Naive thymus-derived CD4-positive, alpha-beta T cell (primary cell): ENCODE measurements at regions of chr1 and their contacts with region 1.

Region 1: DNA sequence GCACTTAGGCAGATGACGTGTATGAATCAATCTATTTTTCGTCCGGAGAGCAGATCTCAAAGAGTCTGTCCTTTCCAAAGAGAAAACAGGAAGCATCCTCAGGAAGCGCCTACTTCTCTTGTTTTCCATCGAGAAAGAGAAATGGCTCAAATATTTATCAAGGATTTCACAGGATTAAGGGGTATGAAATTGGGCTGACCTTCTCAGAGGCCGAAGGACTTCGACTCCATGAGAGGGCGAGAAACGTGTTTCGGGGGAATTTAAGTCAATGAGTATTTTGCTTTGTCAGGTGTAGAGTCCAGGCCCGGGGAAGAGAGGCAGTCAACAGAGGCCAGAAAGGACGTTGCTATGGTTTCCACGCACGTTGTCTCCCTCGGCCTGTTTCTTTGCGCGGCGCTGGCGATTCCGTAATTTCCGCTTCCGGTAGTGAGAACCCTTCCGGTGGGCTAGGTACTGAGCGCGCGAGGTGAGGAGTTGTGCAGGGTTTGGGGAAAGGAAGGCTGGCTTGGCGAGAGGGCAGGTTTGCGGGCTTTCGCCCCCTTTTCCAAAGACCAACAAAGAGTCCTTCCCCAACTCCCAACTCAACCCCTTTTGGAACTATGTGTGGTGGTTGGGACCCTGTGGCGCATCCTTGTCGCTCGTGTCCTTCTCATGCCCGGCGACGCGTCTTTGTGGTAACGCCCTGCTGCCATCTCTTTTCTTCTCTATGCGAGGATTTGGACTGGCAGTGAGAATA is at the start of gene MRPS21:
- DNase-seq: peak; percentile 64 to 88 (median 83)
- ATAC-seq: peak; percentile 99
- H3K4me3 ChIP-seq: peak within 1 kb of the TSS; percentile 76
- H3K4me3 Mint-ChIP-seq: peak within 1 kb of the TSS; percentile 85 to 97 (median 92)
- H3K27ac ChIP-seq: peak within 1 kb of the TSS; percentile 92
- H3K27ac Mint-ChIP-seq: peak within 1 kb of the TSS; percentile 92 to 100 (median 98)
- H3K4me1 ChIP-seq: peaks cover 10 to 14% of the 10 kb centered on the region in 2 donors
- H3K4me1 Mint-ChIP-seq: peaks cover 20 to 45% (median 32%) of the 10 kb centered on the region in 7 donors
- H3K27me3 ChIP-seq: no peaks in the 10 kb centered on the region
- H3K27me3 Mint-ChIP-seq: no peaks in the 10 kb centered on the region
- total RNA-seq, gene MRPS21: 47.9 to 72.8 (median 67.5) TPM

Region 2: DNA sequence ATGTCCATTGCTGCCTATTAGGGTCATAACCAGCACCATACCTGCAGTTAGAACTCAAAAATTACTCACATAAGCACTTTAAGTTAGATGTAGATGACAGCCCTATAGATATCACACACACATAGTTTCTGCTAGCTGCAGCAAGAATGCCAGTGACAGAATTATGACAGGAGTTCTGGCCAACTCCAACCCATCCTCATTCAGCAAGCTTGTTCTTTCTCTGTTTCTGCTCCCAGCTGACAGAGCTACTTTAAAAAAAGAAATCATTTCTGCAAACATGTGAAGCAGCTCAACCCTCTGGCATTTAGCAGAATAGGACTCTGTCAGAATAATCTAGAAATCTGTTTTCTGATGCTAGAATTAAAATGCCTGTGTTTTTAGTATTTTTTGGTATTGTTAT is 259.3 kb before region 1 on chr1:
- CTCF ChIA-PET with region 1: no interaction called
- POLR2A ChIA-PET with region 1: no interaction called
- intact Hi-C with region 1: no loop called
- DNase-seq: no peak
- ATAC-seq: no peak
- H3K4me3 ChIP-seq: no peak overlapping the region
- H3K4me3 Mint-ChIP-seq: no peak overlapping the region
- H3K27ac ChIP-seq: no peak overlapping the region
- H3K27ac Mint-ChIP-seq: no peak overlapping the region
- H3K4me1 ChIP-seq: no peaks in the 10 kb centered on the region
- H3K4me1 Mint-ChIP-seq: no peaks in the 10 kb centered on the region
- H3K27me3 ChIP-seq: no peaks in the 10 kb centered on the region
- H3K27me3 Mint-ChIP-seq: peaks cover 0 to 20% (median 0%) of the 10 kb centered on the region in 5 donors

Region 3: GRCh38 chr1:150268705-150269403 is 24.7 kb before region 1 on chr1 and contains the start of gene APH1A:
- CTCF ChIA-PET with region 1: no interaction called
- POLR2A ChIA-PET with region 1: interaction called, 4 read pairs
- intact Hi-C with region 1: loop called (anchors 1 kb)
- DNase-seq: peak; percentile 69 to 92 (median 89)
- ATAC-seq: peak; percentile 97
- H3K4me3 ChIP-seq: peak within 1 kb of the TSS; percentile 87
- H3K4me3 Mint-ChIP-seq: peak within 1 kb of the TSS; percentile 94 to 99 (median 96)
- H3K27ac ChIP-seq: peak within 1 kb of the TSS; percentile 97
- H3K27ac Mint-ChIP-seq: peak within 1 kb of the TSS; percentile 88 to 99 (median 94)
- H3K4me1 ChIP-seq: peaks cover 13 to 20% of the 10 kb centered on the region in 2 donors
- H3K4me1 Mint-ChIP-seq: peaks cover 25 to 39% (median 30%) of the 10 kb centered on the region in 7 donors
- H3K27me3 ChIP-seq: no peaks in the 10 kb centered on the region
- H3K27me3 Mint-ChIP-seq: no peaks in the 10 kb centered on the region
- total RNA-seq, gene APH1A: 112 to 143 (median 127) TPM

Region 4: GRCh38 chr1:150281837-150282653 is 11.6 kb before region 1 on chr1 and contains the start of gene CIART:
- CTCF ChIA-PET with region 1: no interaction called
- POLR2A ChIA-PET with region 1: interaction called, 4 read pairs
- intact Hi-C with region 1: loop called in 1 of 2 experiments (anchors 1 kb)
- DNase-seq: peak; percentile 34 to 88 (median 82)
- ATAC-seq: peak; percentile 95
- H3K4me3 ChIP-seq: peak within 1 kb of the TSS; percentile 58
- H3K4me3 Mint-ChIP-seq: peak within 1 kb of the TSS; percentile 84 to 98 (median 94)
- H3K27ac ChIP-seq: peak within 1 kb of the TSS; percentile 52
- H3K27ac Mint-ChIP-seq: peak within 1 kb of the TSS; percentile 80 to 98 (median 91)
- H3K4me1 ChIP-seq: peaks cover 11 to 23% of the 10 kb centered on the region in 2 donors
- H3K4me1 Mint-ChIP-seq: peaks cover 20 to 36% (median 32%) of the 10 kb centered on the region in 7 donors
- H3K27me3 ChIP-seq: no peaks in the 10 kb centered on the region
- H3K27me3 Mint-ChIP-seq: peaks cover 0 to 13% (median 0%) of the 10 kb centered on the region in 5 donors
- total RNA-seq, gene CIART: 1.4 to 2.6 (median 2.4) TPM

Region 5: GRCh38 chr1:150309770-150310508 is 16.3 kb after region 1 on chr1:
- CTCF ChIA-PET with region 1: no interaction called
- POLR2A ChIA-PET with region 1: no interaction called
- intact Hi-C with region 1: loop called in 1 of 2 experiments (anchors 1 kb)
- DNase-seq: no peak
- ATAC-seq: no peak
- H3K4me3 ChIP-seq: no peak overlapping the region
- H3K4me3 Mint-ChIP-seq: no peak overlapping the region
- H3K27ac ChIP-seq: no peak overlapping the region
- H3K27ac Mint-ChIP-seq: peak overlapping the region in 1 of 9 donors; percentile 90
- H3K4me1 ChIP-seq: no peaks in the 10 kb centered on the region
- H3K4me1 Mint-ChIP-seq: no peaks in the 10 kb centered on the region
- H3K27me3 ChIP-seq: no peaks in the 10 kb centered on the region
- H3K27me3 Mint-ChIP-seq: no peaks in the 10 kb centered on the region

Region 6: GRCh38 chr1:150321826-150322166 is 28.2 kb after region 1 on chr1:
- CTCF ChIA-PET with region 1: no interaction called
- POLR2A ChIA-PET with region 1: interaction called, 3 read pairs
- intact Hi-C with region 1: loop called (anchors 1 kb)
- DNase-seq: peak in 5 of 9 donors; percentile 3 to 21 (median 14)
- ATAC-seq: peak; percentile 9
- H3K4me3 ChIP-seq: peak overlapping the region; percentile 97
- H3K4me3 Mint-ChIP-seq: peak overlapping the region; percentile 95 to 100 (median 99)
- H3K27ac ChIP-seq: peak overlapping the region; percentile 76
- H3K27ac Mint-ChIP-seq: peak overlapping the region; percentile 95 to 100 (median 99)
- H3K4me1 ChIP-seq: peaks cover 14 to 16% of the 10 kb centered on the region in 2 donors
- H3K4me1 Mint-ChIP-seq: peaks cover 10 to 54% (median 41%) of the 10 kb centered on the region in 7 donors
- H3K27me3 ChIP-seq: no peaks in the 10 kb centered on the region
- H3K27me3 Mint-ChIP-seq: peaks cover 0 to 2% (median 0%) of the 10 kb centered on the region in 5 donors